ENCODE measurements at regions of chr11 and their contacts with region 1.

Region 1: DNA sequence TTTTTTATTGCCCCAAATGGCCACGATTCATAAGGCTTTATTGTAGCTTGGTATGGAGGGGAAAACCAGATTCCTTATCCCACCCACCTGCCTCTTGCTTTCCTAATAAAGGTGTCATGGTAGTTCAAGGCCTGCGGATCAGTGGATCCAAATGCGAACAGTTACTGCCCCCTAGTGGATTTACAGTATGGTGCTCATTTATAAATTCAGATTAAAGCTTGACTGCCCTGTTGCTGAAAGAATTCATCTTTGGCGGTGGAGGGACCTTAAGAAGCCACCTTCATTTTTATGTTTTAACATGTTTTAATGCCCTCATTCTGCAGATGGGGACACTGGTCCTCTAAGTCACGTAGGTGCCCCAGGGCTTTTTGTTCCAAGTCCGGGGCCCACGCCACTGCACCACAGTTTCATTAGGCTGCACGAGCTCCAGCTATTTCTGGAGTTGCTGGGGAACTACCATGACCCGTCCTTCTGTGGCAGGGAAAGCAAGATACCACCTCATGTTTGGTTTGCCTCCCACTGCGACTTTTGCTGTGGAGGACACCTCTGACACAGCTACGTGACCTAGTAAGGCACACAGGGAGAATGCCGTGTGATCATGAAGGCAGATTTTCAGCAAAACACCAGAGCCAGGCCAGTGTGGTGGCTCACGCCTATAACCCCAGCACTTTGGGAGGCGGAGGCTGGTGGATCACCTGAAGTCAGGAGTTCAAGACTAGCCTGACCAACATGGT is 15.6 kb upstream of the INCENP start:
- DNase-seq: no peak

Region 2: DNA sequence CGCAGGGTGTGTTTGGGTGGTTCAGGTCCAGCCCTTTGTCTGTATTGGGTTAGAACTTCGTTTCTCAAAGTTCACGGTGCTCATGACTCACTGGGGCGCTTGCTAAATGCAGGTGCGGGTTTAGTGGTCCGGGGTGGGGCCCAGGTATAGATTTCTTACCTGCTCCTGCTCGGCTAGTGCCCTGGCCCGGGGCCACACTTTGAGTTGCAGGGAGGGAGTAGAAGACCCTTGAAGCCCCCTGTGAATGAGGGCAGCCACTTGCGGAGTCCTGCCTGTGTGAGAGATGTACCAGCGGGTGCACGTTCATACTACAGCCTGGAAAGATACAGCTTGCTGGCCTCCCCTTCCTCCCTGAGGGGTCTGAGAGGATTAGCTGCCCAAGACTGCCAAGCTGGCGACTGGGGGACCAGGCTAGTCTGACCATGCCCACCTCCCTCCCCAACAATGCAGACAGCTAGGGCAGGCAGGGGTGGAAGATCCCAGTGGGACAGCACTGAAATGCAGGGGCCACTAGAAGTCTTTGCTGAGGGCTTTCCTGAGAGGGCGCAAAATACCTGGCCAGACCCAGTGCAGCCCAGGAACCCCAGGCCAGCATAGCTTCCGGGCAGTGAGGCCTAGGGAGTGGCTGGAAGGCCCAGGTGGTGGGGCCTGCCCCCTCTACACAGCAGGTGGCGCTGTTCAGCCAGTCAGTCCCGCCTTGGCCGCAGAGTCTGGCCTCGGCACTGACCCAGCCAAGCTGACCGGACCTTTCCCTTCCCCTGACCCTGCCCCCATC is 360.8 kb before region 1 on chr11:
- intact Hi-C with region 1: loop called (anchors 5 kb)
- DNase-seq: peak; percentile 87

Region 3: GRCh38 chr11:61797263-61797944 is 310.8 kb before region 1 on chr11:
- intact Hi-C with region 1: loop called (anchors 5 kb)
- DNase-seq: no peak

Region 4: GRCh38 chr11:61816736-61817455 is 291.3 kb before region 1 on chr11 and contains the start of gene FADS1:
- intact Hi-C with region 1: loop called (anchors 5 kb)
- DNase-seq: peak; percentile 92
- total RNA-seq, gene FADS1: 34.0 TPM

Region 5: GRCh38 chr11:61871158-61871597 is 237.0 kb before region 1 on chr11:
- intact Hi-C with region 1: loop called (anchors 5 kb)
- DNase-seq: peak; percentile 90

Region 6: DNA sequence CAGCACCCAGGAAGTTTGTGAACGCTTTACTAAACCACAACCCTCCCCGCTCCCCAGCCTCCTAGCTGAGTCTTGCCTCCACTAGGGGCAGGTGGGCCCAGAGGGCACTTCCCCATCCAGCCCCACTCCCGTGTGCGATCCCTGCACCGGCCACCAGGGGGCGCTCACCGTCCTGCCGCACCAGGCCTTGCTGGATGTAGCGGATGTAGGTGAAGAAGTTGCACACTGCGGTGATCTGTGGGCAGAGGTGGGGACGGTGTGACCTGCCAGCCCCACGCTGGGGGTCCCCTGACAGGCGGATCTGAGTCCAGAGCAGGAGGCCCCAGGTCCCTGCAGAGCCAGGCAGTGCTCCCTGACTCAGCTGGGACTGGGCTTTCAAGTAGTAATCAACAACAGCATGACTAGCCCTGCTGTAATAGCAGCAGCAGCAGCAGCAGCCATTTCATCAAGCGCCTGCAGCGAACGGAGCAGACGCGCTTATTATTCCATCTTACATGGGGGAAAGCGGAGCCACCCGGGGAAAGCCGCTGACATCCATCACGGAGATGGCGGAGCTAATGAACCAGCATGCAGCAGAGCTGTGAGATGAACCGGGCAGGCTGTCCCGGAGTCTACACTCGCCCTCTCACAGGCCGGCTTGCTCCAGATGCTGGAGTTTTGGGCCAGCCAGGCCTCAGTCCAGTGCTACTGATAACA is 208.9 kb before region 1 on chr11:
- intact Hi-C with region 1: loop called (anchors 5 kb)
- DNase-seq: peak; percentile 97

Region 7: DNA sequence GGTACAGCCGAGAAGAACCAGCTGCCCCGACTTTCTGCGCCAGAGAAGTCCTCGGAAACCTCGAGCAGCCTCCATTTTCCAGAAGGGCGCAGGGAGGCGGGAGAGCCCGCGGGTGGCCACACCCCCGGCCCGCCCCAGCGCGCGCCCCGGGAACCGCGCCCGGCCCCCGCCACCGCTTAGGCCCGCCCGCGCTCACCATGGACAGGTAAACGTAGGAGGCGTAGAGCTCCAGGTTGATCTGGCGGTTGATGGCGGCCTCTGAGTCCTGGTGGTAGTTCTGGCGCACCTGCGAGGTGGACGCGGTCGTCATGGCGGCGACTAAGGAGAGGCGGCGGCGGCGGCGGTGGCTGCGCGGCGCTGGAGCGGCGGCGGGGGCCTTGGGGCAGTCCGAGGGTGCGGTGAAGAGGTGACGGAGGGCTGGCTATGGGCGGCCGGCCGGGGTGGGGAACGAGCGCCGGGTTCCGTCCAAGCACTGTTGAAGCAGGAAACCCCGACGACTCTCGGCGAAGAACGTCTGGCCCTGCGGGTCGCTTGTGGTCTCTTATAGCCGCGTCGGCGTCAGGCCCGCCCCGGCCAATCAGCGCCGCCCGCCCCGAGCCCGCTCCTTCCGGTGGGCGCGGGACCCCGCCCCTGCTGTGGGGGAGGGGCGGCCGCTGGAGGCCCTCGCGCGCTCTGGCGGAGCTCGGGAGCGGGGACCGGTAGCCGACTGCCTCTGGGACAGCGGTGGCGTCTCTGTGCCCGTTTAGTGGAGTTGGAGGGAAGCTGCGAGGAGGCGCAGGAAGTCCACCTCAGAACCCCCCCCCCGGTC is 140.9 kb before region 1 on chr11 and contains the start of gene FTH1:
- intact Hi-C with region 1: loop called (anchors 5 kb)
- DNase-seq: peak; percentile 97
- total RNA-seq, gene FTH1: 3,174 TPM

Region 8: GRCh38 chr11:62143727-62144126 is 35.5 kb after region 1 on chr11:
- intact Hi-C with region 1: no loop called
- DNase-seq: peak; percentile 19

Region 9: DNA sequence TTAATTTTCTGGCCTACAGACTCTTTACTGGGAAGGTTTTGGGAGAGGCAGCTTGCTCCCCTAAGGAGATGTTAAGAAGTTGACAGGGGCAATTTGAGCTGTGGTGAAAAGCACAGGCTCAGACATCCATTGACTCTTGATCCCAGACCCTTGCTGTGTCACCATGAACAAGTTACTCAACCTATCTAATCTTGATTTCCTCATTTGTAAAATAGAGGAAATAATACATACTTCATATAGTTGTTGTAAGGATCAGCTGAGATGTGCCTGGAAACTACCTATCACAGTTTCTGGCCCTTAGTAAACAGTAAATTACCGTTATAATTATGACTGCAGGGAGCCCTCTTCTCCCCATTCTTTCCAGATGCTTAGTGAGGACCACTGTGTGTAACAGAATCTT is 207.2 kb after region 1 on chr11:
- intact Hi-C with region 1: no loop called
- DNase-seq: no peak